Natural killer cell (primary cell): ENCODE measurements at regions of chr10 and their contacts with region 1.

Region 1: GRCh38 chr10:99560277-99561126 is 27.8 kb downstream of the NKX2-3 start:
- DNase-seq: peak; percentile 24 to 67
- ATAC-seq: peak in 2 of 3 donors; percentile 50 to 54
- H3K4me3 ChIP-seq: no peak overlapping the region
- H3K4me3 Mint-ChIP-seq: no peak overlapping the region
- H3K27ac ChIP-seq: no peak overlapping the region
- H3K27ac Mint-ChIP-seq: no peak overlapping the region
- H3K4me1 ChIP-seq: no peaks in the 10 kb centered on the region
- H3K4me1 Mint-ChIP-seq: peaks cover 0 to 5% of the 10 kb centered on the region in 2 donors
- H3K27me3 ChIP-seq: no peaks in the 10 kb centered on the region
- H3K27me3 Mint-ChIP-seq: peaks cover 9 to 17% of the 10 kb centered on the region in 2 donors
- CTCF ChIP-seq: peak; percentile 86

Region 2: DNA sequence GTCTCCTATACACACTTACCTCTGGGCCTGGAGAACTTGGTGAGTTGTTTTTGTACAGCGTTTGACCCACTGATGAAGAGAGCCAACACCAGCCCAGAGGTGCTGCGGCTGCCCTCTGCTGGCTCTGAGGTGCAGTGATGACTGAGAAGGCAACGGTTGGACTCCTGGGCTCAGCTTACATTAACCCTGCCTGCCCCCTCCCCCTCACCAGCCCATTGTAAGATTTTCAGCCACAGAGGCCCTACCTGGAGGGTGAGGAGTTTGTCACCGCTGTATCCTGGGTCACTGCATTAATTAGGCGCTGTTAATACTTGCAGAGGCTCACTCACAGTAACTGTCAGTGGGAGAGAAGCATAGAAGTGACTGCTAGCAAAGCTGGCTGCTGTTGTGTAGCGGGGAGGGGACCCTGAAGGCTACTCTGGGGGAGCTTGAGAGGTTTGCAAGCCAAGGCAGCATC is 2006.9 kb before region 1 on chr10:
- intact Hi-C with region 1: no loop called
- DNase-seq: peak; percentile 42 to 74
- ATAC-seq: peak; percentile 67 to 99 (median 88)
- H3K4me3 ChIP-seq: no peak overlapping the region
- H3K4me3 Mint-ChIP-seq: no peak overlapping the region
- H3K27ac ChIP-seq: no peak overlapping the region
- H3K27ac Mint-ChIP-seq: no peak overlapping the region
- H3K4me1 ChIP-seq: no peaks in the 10 kb centered on the region
- H3K4me1 Mint-ChIP-seq: peaks cover 0 to 4% of the 10 kb centered on the region in 2 donors
- H3K27me3 ChIP-seq: no peaks in the 10 kb centered on the region
- H3K27me3 Mint-ChIP-seq: no peaks in the 10 kb centered on the region
- CTCF ChIP-seq: peak; percentile 68

Region 3: DNA sequence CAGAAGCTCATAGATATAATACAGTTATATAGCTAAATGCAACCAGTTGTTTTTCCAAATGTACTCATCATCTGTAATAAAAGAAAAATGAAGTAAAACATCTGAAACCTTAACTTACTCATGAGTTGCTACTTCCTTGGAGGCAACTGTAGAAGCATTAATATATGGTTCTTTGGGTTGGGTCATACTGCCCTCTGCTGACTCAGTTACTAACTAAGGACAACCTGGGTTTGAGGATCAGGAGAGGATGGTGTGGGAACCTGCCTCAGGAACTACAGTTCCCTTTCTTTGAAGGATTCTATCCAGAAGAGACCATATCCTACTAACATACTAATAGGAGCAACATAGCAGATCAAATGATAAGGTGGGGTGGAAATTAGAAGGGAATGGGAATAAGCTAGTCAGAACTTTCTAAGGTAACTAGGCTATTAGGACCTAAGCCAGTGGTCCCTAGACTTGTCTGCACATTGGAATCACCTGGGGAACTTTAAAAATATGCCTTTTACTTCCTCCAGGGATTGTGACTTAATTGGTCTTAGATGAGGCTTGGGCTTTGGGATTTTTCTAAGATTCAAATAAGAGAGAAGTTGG is 150.7 kb after region 1 on chr10:
- intact Hi-C with region 1: loop called (anchors 1 kb)
- DNase-seq: peak in 1 of 2 donors; percentile 65
- ATAC-seq: peak in 2 of 3 donors; percentile 53 to 56
- H3K4me3 ChIP-seq: no peak overlapping the region
- H3K4me3 Mint-ChIP-seq: no peak overlapping the region
- H3K27ac ChIP-seq: no peak overlapping the region
- H3K27ac Mint-ChIP-seq: no peak overlapping the region
- H3K4me1 ChIP-seq: no peaks in the 10 kb centered on the region
- H3K4me1 Mint-ChIP-seq: no peaks in the 10 kb centered on the region
- H3K27me3 ChIP-seq: no peaks in the 10 kb centered on the region
- H3K27me3 Mint-ChIP-seq: no peaks in the 10 kb centered on the region
- CTCF ChIP-seq: peak; percentile 23